H1 (cell line): ENCODE measurements at regions of chr11 and their contacts with region 1.

Region 1: DNA sequence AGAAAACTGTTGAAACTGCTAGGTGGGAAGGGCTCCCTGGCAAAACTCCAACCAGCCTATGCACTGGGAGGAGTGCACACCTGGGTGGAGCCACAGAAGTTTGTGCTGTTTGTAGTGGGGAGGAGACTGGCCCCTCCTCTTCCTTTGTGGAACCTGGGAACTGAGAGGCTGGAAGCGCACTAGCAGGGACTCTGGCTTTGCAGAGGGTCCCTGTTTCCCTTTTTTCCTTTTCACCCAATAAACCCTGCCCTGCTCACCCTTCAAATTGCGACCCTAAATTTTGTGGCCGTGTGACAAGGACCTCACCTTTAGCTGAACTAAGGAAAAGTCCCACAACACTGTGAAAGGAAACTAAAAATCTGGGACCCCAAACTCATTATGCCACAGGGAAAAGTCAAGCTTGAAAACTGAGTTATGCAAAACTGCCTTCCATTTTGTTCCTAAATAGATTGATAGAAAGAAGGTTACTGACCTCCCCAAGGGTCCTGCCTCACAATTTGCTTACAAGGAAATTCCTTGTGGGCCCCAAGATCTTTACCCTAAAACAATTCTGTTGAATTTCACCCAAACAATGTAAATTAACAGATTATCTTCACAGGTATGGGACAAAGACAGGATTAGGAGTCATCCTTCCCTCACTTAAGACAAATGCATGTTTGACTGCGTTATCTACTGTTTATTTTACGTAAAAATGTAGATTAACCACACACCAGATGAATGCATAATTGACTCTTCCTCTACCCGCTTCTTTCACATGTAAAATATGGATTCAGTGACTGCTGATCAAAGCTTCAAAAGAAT is 81.0 kb downstream of the SLC36A4 start:
- DNase-seq: peak; percentile 49 to 60
- H3K4me3 ChIP-seq: peak overlapping the region in 2 of 4 experiments; percentile 12 to 47; a peak in 3 of 8 replicates
- H3K27ac ChIP-seq: peak overlapping the region; percentile 70
- H3K4me1 ChIP-seq: peaks cover 2 to 30% (median 25%) of the 10 kb centered on the region in 4 experiments
- H3K27me3 ChIP-seq: no peaks in the 10 kb centered on the region
- CTCF ChIP-seq: no peak
- EP300 ChIP-seq: no peak
- POLR2A ChIP-seq: peak; percentile 68 to 99
- RAD21 ChIP-seq: no peak; a peak in 1 of 4 replicates

Region 2: GRCh38 chr11:93073026-93073425 is 43.8 kb before region 1 on chr11:
- CTCF ChIA-PET with region 1: interaction called, 8 read pairs
- POLR2A ChIA-PET with region 1: interaction called, 13 read pairs
- DNase-seq: peak in 1 of 2 experiments; percentile 52
- H3K4me3 ChIP-seq: peak overlapping the region in 2 of 4 experiments; percentile 12 to 35; a peak in 2 of 8 replicates
- H3K27ac ChIP-seq: peak overlapping the region; percentile 65
- H3K4me1 ChIP-seq: peaks cover 7 to 18% (median 12%) of the 10 kb centered on the region in 4 experiments; a peak in 6 of 7 replicates
- H3K27me3 ChIP-seq: no peaks in the 10 kb centered on the region
- CTCF ChIP-seq: no peak
- EP300 ChIP-seq: no peak
- POLR2A ChIP-seq: no peak
- RAD21 ChIP-seq: no peak

Region 3: GRCh38 chr11:93080146-93080759 is 36.6 kb before region 1 on chr11:
- CTCF ChIA-PET with region 1: interaction called, 13 read pairs
- POLR2A ChIA-PET with region 1: interaction called, 3 read pairs
- DNase-seq: no peak
- H3K4me3 ChIP-seq: no peak overlapping the region
- H3K27ac ChIP-seq: no peak overlapping the region
- H3K4me1 ChIP-seq: peaks cover 0 to 16% (median 8%) of the 10 kb centered on the region in 4 experiments; a peak in 4 of 7 replicates
- H3K27me3 ChIP-seq: no peaks in the 10 kb centered on the region; a peak in 3 of 7 replicates
- CTCF ChIP-seq: no peak
- EP300 ChIP-seq: no peak
- POLR2A ChIP-seq: no peak
- RAD21 ChIP-seq: no peak

Region 4: DNA sequence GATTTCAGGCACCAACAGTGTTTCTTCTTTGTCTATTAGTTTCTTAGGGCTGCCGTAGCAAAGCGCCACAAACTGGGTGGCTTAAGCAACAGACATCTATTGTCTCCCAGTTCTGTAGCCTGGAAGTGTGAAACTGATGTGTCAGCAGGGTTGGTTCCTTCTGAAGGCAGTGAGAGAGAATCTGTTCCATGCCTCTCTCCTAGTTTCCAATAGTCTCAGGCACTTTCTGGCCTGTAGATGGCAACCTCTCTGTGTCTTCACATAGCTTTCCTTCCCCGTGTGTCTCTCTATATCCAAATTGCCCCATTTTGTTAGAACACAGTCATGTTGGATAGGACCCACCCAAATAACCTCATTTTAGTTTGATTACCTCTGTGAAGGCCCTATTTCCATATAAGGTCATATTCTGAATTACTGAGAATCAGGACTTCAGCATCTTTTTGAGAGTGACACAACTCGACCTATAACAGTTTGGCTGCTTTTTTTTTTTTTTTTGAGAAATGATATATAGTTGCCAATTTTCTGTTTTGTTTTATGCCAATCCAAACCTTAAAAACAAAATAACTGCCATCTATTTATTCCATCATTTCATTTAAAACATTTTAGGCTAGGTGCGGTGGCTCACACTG is 27.3 kb before region 1 on chr11:
- CTCF ChIA-PET with region 1: interaction called, 33 read pairs
- POLR2A ChIA-PET with region 1: interaction called, 3 read pairs
- DNase-seq: no peak
- H3K4me3 ChIP-seq: no peak overlapping the region
- H3K27ac ChIP-seq: no peak overlapping the region
- H3K4me1 ChIP-seq: peaks cover 0 to 9% (median 3%) of the 10 kb centered on the region in 4 experiments; a peak in 4 of 7 replicates
- H3K27me3 ChIP-seq: no peaks in the 10 kb centered on the region
- CTCF ChIP-seq: peak in 2 of 3 experiments; percentile 54 to 80; a peak in 3 of 4 replicates
- EP300 ChIP-seq: no peak; a peak in 1 of 3 replicates
- POLR2A ChIP-seq: no peak
- RAD21 ChIP-seq: peak; percentile 54 to 70

Region 5: GRCh38 chr11:93099806-93100205 is 17.0 kb before region 1 on chr11:
- CTCF ChIA-PET with region 1: interaction called, 25 read pairs
- POLR2A ChIA-PET with region 1: interaction called, 10 read pairs
- DNase-seq: no peak
- H3K4me3 ChIP-seq: no peak overlapping the region
- H3K27ac ChIP-seq: no peak overlapping the region
- H3K4me1 ChIP-seq: peaks cover 0 to 3% (median 1%) of the 10 kb centered on the region in 4 experiments; a peak in 3 of 7 replicates
- H3K27me3 ChIP-seq: no peaks in the 10 kb centered on the region
- CTCF ChIP-seq: no peak
- EP300 ChIP-seq: no peak
- POLR2A ChIP-seq: no peak
- RAD21 ChIP-seq: no peak

Region 6: DNA sequence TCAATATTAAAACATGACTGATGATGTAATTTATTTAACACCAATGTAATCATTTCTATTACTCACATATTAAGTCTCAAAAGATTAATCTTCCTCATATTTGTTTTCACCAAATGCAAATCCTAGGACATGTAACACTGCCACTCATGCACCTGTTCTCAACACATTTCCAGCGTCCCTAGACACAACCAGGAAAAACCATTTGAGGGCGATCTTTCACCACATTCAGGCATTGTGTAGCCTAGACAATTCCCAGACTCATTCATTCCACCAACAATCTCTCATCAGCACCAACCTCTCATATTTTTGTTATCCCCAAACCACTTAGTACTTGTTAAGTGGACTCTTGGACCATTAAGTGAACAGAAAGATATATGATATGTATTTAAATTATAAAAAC is 14.9 kb after region 1 on chr11:
- CTCF ChIA-PET with region 1: interaction called, 8 read pairs
- POLR2A ChIA-PET with region 1: interaction called, 29 read pairs
- DNase-seq: no peak
- H3K4me3 ChIP-seq: no peak overlapping the region
- H3K27ac ChIP-seq: no peak overlapping the region
- H3K4me1 ChIP-seq: no peaks in the 10 kb centered on the region
- H3K27me3 ChIP-seq: no peaks in the 10 kb centered on the region
- CTCF ChIP-seq: peak in 2 of 3 experiments; percentile 70; a peak in 3 of 4 replicates
- EP300 ChIP-seq: no peak
- POLR2A ChIP-seq: no peak
- RAD21 ChIP-seq: peak; percentile 88 to 90

Region 7: GRCh38 chr11:93169950-93170561 is 53.2 kb after region 1 on chr11:
- CTCF ChIA-PET with region 1: interaction called, 13 read pairs
- POLR2A ChIA-PET with region 1: no interaction called
- DNase-seq: no peak
- H3K4me3 ChIP-seq: no peak overlapping the region
- H3K27ac ChIP-seq: no peak overlapping the region
- H3K4me1 ChIP-seq: no peaks in the 10 kb centered on the region
- H3K27me3 ChIP-seq: no peaks in the 10 kb centered on the region
- CTCF ChIP-seq: peak in 1 of 3 experiments; percentile 36; a peak in 2 of 4 replicates
- EP300 ChIP-seq: no peak
- POLR2A ChIP-seq: no peak
- RAD21 ChIP-seq: peak; percentile 55 to 63

Region 8: GRCh38 chr11:93209466-93209865 is 92.6 kb after region 1 on chr11:
- CTCF ChIA-PET with region 1: no interaction called
- POLR2A ChIA-PET with region 1: no interaction called
- DNase-seq: no peak
- H3K4me3 ChIP-seq: no peak overlapping the region
- H3K27ac ChIP-seq: no peak overlapping the region
- H3K4me1 ChIP-seq: no peaks in the 10 kb centered on the region
- H3K27me3 ChIP-seq: no peaks in the 10 kb centered on the region
- CTCF ChIP-seq: no peak
- EP300 ChIP-seq: no peak
- POLR2A ChIP-seq: no peak
- RAD21 ChIP-seq: no peak